ENCODE measurements at regions of chr3 and their contacts with region 1.

Region 1: DNA sequence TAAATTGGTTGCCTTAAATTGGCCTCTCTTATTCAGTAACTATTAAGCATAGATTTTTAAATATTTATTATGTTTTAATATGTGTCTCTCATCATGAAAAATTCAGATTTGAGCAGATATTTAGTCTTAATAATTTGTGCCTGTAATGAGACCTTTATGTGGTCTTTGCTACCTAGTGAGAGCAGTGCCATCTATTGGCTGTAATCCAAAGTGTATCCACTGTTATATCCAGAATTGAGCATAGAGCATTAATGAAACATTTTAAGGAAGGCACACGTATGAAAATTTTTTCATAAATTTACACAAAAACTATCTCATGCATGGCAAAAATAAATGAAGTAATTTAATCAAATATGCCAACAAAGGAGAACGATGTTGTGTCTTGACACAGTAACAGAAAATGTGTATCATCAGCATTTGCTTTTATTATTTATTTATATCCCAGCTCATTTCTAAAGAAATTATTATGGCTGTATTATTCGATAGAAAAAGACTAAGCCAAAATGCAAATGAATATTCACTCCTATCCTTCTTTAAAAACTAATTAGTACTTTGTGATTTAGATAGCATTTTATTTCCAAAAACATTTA is 203.5 kb downstream of the RSRC1 start:
- DNase-seq: peak; percentile 9 to 48 (median 14)
- ATAC-seq: peak; percentile 87
- H3K4me3 ChIP-seq: no peak overlapping the region
- H3K27ac ChIP-seq: no peak overlapping the region
- H3K4me1 ChIP-seq: peaks cover 8 to 12% of the 10 kb centered on the region in 2 experiments; a peak in 3 of 5 replicates
- H3K27me3 ChIP-seq: no peaks in the 10 kb centered on the region
- CTCF ChIP-seq: peak in 2 of 3 experiments; percentile 48 to 68; a peak in 4 of 6 replicates
- EP300 ChIP-seq: no peak
- POLR2A ChIP-seq: no peak
- RAD21 ChIP-seq: peak; percentile 55 to 72

Region 2: GRCh38 chr3:157618075-157618760 is 695.2 kb before region 1 on chr3:
- CTCF ChIA-PET with region 1: no interaction called
- POLR2A ChIA-PET with region 1: no interaction called
- in situ Hi-C with region 1: no loop called
- intact Hi-C with region 1: loop called (anchors 1 kb)
- DNase-seq: peak; percentile 57 to 70 (median 66)
- ATAC-seq: peak; percentile 78
- H3K4me3 ChIP-seq: no peak overlapping the region
- H3K27ac ChIP-seq: no peak overlapping the region
- H3K4me1 ChIP-seq: no peaks in the 10 kb centered on the region
- H3K27me3 ChIP-seq: peaks cover 0 to 6% of the 10 kb centered on the region in 2 experiments; a peak in 3 of 5 replicates
- CTCF ChIP-seq: peak; percentile 29 to 74 (median 60); a peak in 5 of 6 replicates
- EP300 ChIP-seq: no peak
- POLR2A ChIP-seq: no peak
- RAD21 ChIP-seq: peak; percentile 59 to 71

Region 3: DNA sequence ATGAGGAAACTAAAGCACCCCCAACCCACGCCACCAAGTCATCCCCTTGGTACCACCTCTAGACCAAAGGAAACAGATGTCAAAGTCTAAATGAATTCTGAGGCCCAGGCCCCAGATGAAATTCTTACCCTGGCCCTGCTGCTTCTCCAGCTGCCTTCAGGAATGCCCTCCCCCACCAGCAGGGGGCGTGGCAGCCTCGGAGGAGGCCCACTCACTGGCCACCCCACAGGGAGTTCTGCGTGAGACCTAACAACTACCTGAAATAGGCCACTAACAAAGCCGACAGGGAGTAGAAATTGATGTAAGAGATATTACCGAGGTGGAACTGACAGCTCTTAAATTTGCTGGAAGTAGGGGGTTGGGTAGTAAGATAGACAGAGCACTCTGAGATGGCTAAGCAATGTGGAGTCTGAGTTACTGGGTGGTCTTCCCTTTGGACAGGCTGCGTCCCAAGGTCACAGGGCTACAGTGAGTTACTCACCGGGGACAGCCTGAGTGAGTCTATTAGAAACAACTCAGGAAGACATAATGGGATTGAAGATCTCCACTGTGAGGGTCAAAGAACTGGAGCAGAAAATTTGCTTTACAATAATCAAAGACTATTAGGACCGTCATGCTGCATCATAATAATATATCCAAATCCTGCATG is 448.0 kb before region 1 on chr3:
- CTCF ChIA-PET with region 1: no interaction called
- POLR2A ChIA-PET with region 1: no interaction called
- in situ Hi-C with region 1: loop called (anchors 25 kb)
- intact Hi-C with region 1: loop called (anchors 1 kb)
- DNase-seq: peak; percentile 71 to 80 (median 76)
- ATAC-seq: peak; percentile 100
- H3K4me3 ChIP-seq: no peak overlapping the region
- H3K27ac ChIP-seq: no peak overlapping the region
- H3K4me1 ChIP-seq: no peaks in the 10 kb centered on the region
- H3K27me3 ChIP-seq: no peaks in the 10 kb centered on the region
- CTCF ChIP-seq: peak; percentile 80 to 94 (median 89)
- EP300 ChIP-seq: no peak
- POLR2A ChIP-seq: no peak
- RAD21 ChIP-seq: peak; percentile 93 to 94

Region 4: GRCh38 chr3:158094235-158095110 is 219.0 kb before region 1 on chr3:
- CTCF ChIA-PET with region 1: interaction called, 4 read pairs
- POLR2A ChIA-PET with region 1: no interaction called
- in situ Hi-C with region 1: no loop called
- intact Hi-C with region 1: loop called (anchors 2 kb)
- DNase-seq: no peak
- ATAC-seq: no peak
- H3K4me3 ChIP-seq: no peak overlapping the region
- H3K27ac ChIP-seq: no peak overlapping the region
- H3K4me1 ChIP-seq: no peaks in the 10 kb centered on the region
- H3K27me3 ChIP-seq: no peaks in the 10 kb centered on the region
- CTCF ChIP-seq: no peak
- EP300 ChIP-seq: no peak
- POLR2A ChIP-seq: no peak
- RAD21 ChIP-seq: no peak

Region 5: GRCh38 chr3:158434412-158435038 is 121.1 kb after region 1 on chr3:
- CTCF ChIA-PET with region 1: no interaction called
- POLR2A ChIA-PET with region 1: no interaction called
- in situ Hi-C with region 1: no loop called
- intact Hi-C with region 1: loop called (anchors 5 kb)
- DNase-seq: peak; percentile 11 to 80 (median 24)
- ATAC-seq: peak; percentile 98
- H3K4me3 ChIP-seq: no peak overlapping the region
- H3K27ac ChIP-seq: no peak overlapping the region
- H3K4me1 ChIP-seq: no peaks in the 10 kb centered on the region
- H3K27me3 ChIP-seq: no peaks in the 10 kb centered on the region
- CTCF ChIP-seq: peak; percentile 55 to 85 (median 67)
- EP300 ChIP-seq: no peak
- POLR2A ChIP-seq: no peak
- RAD21 ChIP-seq: peak; percentile 87 to 91

Region 6: DNA sequence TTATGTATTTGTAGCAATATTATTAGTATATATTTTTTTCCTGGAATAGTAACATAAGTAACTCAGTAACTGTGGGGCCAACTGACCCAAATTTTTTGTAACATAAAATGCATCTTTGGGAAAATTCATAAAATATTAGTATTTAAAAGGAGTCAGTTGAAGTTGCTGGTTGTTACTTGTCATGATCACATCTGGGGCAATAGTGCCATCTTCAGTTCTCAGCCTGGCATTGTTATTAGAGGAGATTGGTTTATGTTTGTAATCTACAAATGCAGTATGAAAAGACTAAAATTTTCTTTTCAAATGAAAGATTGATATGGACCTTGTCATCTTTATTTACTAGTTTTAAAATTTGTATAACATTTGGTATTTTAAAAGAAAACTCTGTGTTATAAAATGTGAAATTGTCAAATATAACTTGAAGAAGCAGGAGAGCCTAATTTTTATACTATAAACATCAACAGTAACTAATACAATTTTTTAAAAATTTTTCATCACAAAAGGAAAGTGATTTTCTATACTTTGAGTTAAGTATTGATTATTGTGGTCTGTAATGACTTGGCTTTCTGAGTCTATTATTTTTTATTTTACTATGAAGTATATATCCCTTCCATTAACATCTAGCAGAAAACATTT is 218.8 kb after region 1 on chr3:
- CTCF ChIA-PET with region 1: no interaction called
- POLR2A ChIA-PET with region 1: no interaction called
- in situ Hi-C with region 1: no loop called
- intact Hi-C with region 1: loop called (anchors 5 kb)
- DNase-seq: peak; percentile 8 to 39 (median 16)
- ATAC-seq: no peak
- H3K4me3 ChIP-seq: no peak overlapping the region
- H3K27ac ChIP-seq: no peak overlapping the region
- H3K4me1 ChIP-seq: no peaks in the 10 kb centered on the region
- H3K27me3 ChIP-seq: no peaks in the 10 kb centered on the region
- CTCF ChIP-seq: peak in 2 of 3 experiments; percentile 33 to 65; a peak in 3 of 6 replicates
- EP300 ChIP-seq: no peak
- POLR2A ChIP-seq: no peak
- RAD21 ChIP-seq: peak; percentile 46 to 59

Region 7: DNA sequence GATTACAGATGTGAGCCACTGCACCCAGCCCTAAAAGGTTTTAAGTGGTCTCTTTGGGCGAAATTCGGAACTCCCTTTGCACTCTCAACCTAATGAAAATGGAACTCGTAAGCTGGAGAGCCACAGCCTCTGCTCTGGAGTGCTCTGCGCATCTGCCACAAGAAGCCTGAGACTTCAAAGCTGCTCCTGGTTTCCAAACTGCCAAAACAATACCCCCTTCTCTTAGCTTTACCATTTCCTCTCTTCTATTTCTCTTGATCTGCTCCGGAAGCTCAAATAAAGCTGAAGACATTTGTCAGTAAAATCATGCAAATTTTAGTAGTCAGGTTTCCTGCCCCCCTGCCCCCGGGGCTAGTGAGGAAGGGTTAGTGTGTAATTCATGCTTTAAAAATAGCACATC is 801.1 kb after region 1 on chr3:
- CTCF ChIA-PET with region 1: no interaction called
- POLR2A ChIA-PET with region 1: no interaction called
- in situ Hi-C with region 1: no loop called
- intact Hi-C with region 1: no loop called
- DNase-seq: no peak
- ATAC-seq: no peak
- H3K4me3 ChIP-seq: no peak overlapping the region
- H3K27ac ChIP-seq: no peak overlapping the region
- H3K4me1 ChIP-seq: no peaks in the 10 kb centered on the region
- H3K27me3 ChIP-seq: no peaks in the 10 kb centered on the region
- CTCF ChIP-seq: no peak
- EP300 ChIP-seq: no peak
- POLR2A ChIP-seq: no peak
- RAD21 ChIP-seq: no peak